Activated CD8-positive, alpha-beta T cell treated with anti-CD3 and anti-CD28 coated beads, Interleukin-2, amount 10 ng/mL, durations not matched to agents 7 days and 5 days (primary cell): ENCODE measurements at regions of chr16 and their contacts with region 1.

Region 1: DNA sequence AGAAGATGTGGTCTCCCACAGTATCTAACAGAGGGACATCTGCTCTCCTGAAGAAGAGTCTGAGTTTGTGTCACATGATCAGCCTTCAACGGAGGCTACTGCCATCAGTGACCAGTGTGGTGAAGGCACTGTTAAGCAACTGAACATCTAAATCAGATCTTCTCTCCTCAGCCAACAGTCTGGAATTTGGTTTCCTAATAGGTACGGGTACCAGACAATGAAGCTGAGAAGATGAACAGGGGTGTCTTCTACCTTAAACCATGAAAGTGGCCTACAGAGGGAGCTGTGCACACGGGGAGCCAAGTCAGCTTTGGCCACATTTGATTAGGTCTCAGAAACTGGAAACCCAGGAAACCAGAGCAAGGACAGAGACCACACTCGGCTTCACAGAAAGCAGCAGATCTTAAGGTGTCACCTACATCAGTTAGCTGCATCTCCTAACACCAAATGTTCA is 41.8 kb downstream of the BRD7 start:
- DNase-seq: peak; percentile 88
- ATAC-seq: peak; percentile 96
- H3K4me3 Mint-ChIP-seq: no peak overlapping the region
- H3K27ac Mint-ChIP-seq: peak overlapping the region; percentile 78
- H3K4me1 Mint-ChIP-seq: peaks cover 62% of the 10 kb centered on the region
- H3K27me3 Mint-ChIP-seq: no peaks in the 10 kb centered on the region

Region 2: DNA sequence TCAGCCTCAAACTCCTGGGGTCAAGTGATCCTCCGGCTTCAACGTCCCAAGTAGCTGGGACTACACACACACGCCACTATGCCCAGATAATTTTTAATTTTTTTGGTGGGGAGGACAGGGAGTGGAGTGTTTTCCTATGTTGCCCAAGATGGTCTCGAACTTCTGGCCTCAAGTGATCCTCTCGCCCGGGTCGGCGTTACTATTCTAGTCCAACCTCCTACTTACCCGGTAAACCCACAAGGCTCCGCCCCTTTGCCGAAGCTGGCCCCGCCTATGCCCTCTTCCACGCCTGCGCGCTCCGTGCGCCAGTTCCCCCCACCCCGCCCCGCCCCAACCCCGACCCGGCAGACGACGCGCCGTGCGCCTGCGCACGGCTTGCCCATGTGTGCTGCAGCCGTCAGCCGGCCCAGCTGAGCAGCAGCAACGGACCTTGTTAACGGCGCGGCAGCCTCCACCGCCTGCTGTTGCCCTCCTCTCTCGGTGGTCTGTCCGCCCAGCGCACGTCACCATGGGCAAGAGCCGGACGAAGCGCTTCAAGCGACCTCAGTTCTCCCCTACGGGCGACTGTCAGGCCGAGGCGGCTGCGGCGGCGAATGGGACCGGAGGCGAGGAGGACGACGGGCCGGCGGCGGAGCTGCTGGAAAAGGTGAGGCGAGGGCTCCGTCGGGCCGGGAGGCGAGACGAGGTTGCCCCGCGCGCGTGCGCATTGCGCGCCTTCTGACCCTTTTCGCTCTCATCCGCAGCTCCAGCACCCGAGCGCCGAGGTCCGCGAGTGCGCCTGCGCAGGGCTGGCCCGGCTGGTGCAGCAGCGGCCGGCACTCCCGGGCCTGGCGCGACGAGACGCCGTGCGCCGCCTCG is 261.1 kb before region 1 on chr16 and contains the start of gene HEATR3:
- CTCF ChIA-PET with region 1: interaction called, 12 read pairs
- POLR2A ChIA-PET with region 1: no interaction called
- DNase-seq: peak; percentile 95
- ATAC-seq: peak; percentile 92
- H3K4me3 Mint-ChIP-seq: peak within 1 kb of the TSS; percentile 90
- H3K27ac Mint-ChIP-seq: peak within 1 kb of the TSS; percentile 94
- H3K4me1 Mint-ChIP-seq: peaks cover 39% of the 10 kb centered on the region
- H3K27me3 Mint-ChIP-seq: peaks cover 3% of the 10 kb centered on the region
- total RNA-seq, gene HEATR3: 29.7 to 31.7 TPM

Region 3: GRCh38 chr16:50173316-50173715 is 153.7 kb before region 1 on chr16:
- CTCF ChIA-PET with region 1: no interaction called
- POLR2A ChIA-PET with region 1: no interaction called
- DNase-seq: no peak
- ATAC-seq: no peak
- H3K4me3 Mint-ChIP-seq: no peak overlapping the region
- H3K27ac Mint-ChIP-seq: no peak overlapping the region
- H3K4me1 Mint-ChIP-seq: peaks cover 40% of the 10 kb centered on the region
- H3K27me3 Mint-ChIP-seq: no peaks in the 10 kb centered on the region

Region 4: GRCh38 chr16:50273681-50274325 is 53.2 kb before region 1 on chr16:
- CTCF ChIA-PET with region 1: interaction called, 19 read pairs
- POLR2A ChIA-PET with region 1: interaction called, 7 read pairs
- DNase-seq: peak; percentile 68
- ATAC-seq: peak; percentile 46
- H3K4me3 Mint-ChIP-seq: peak overlapping the region; percentile 79
- H3K27ac Mint-ChIP-seq: peak overlapping the region; percentile 98
- H3K4me1 Mint-ChIP-seq: peaks cover 98% of the 10 kb centered on the region
- H3K27me3 Mint-ChIP-seq: no peaks in the 10 kb centered on the region

Region 5: DNA sequence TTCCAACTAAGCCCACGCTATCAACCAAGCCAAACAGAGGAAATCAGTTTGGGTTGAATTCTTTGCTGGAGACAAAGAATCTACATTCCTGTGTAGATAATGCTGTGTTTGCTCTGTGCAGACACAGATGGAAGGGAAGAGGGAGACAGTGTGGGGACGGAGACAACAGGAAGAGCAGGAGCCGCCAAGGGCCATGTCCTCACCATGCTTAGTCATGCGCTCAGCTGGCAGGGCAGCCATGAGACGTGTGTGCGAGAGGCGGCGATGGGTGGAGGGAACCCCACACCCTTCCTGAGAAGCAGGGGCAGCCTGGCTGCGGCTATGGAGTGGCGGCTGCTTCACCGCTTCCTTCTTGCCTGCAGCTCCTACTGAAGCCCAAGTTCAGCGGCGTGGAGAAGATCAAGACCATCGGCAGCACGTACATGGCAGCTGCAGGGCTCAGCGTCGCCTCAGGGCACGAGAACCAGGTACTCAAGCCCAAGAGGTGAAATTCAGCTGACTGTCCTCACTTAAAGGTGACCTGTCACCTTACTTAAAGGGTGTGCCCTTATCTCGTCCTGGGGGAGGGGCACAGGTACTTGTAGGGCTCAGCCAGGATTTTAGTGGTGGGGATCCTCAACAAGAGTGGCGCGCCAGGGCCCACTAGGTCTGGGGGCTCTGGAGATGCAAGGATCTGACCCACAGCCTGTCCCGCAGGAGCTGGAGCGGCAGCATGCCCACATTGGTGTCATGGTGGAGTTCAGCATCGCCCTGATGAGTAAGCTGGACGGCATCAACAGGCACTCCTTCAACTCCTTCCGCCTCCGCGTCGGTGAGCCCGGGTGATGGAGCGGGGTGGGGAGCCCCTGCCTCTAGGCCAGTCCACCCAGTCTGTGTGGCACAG is 13.1 kb before region 1 on chr16:
- CTCF ChIA-PET with region 1: interaction called, 32 read pairs
- POLR2A ChIA-PET with region 1: interaction called, 5 read pairs
- DNase-seq: peak; percentile 75
- ATAC-seq: peak; percentile 78
- H3K4me3 Mint-ChIP-seq: peak overlapping the region; percentile 37
- H3K27ac Mint-ChIP-seq: peak overlapping the region; percentile 83
- H3K4me1 Mint-ChIP-seq: peaks cover 49% of the 10 kb centered on the region
- H3K27me3 Mint-ChIP-seq: no peaks in the 10 kb centered on the region

Region 6: DNA sequence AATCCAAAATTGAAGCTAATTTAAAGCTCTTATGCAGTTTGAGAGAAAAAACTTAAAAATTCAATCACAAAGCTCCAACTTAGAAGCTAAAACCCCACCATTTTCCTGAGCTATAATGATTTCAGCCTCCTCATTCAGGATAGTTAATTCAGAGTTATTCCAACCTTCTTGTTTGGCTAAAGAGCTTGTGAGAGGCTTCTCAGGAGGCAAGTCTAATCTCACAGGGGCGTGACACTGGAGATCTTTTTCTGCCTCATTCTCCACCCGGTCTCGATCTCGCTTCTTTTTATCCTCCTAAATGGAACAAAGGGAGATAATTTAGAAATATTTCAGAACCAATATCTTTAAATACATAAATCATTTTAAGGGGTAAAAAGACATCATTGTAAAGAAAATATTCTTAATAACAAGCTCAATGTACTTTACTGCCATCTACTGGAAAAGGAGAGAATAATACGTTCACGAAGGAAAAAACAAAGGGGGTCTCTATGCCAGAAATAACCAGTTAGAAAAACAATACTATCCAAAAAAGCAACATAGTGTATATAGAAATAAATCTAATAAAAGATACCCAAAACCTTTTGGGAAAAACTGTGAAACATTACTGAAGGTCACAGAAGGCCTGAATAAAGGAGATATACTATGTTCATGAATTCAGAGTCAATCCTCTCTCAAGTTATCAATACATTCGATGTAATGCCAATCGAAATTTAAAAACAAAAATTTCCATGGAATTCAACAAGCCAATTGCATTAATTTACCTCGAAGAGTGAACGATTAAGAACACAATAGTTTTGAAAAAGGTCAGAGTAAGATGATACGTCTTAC is 27.9 kb after region 1 on chr16:
- CTCF ChIA-PET with region 1: interaction called, 439 read pairs
- POLR2A ChIA-PET with region 1: interaction called, 17 read pairs
- DNase-seq: no peak
- ATAC-seq: no peak
- H3K4me3 Mint-ChIP-seq: no peak overlapping the region
- H3K27ac Mint-ChIP-seq: no peak overlapping the region
- H3K4me1 Mint-ChIP-seq: peaks cover 30% of the 10 kb centered on the region
- H3K27me3 Mint-ChIP-seq: no peaks in the 10 kb centered on the region

Region 7: DNA sequence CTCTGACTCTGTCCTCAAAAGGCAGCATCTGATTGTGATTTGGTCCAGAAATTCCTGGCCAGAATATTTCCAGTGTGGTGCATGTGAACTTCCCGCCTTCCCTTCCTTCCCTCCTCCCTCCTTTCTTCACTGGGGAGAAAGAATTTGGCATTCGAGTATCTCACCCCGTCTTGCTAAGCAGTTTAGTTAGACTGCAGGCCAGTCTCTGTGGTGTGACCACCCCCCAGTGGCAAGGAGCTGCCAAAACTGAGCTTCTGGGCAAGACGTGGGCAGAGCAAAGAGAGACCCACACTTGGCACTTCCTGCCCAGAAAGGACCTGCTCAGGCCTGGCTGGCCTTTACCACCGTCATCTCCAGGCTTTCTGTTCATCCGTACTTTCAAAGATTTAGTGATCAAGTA is 317.8 kb after region 1 on chr16:
- CTCF ChIA-PET with region 1: interaction called, 10 read pairs
- POLR2A ChIA-PET with region 1: no interaction called
- DNase-seq: peak; percentile 42
- ATAC-seq: peak; percentile 60
- H3K4me3 Mint-ChIP-seq: no peak overlapping the region
- H3K27ac Mint-ChIP-seq: no peak overlapping the region
- H3K4me1 Mint-ChIP-seq: no peaks in the 10 kb centered on the region
- H3K27me3 Mint-ChIP-seq: peaks cover 2% of the 10 kb centered on the region